PC-9 (cell line): ENCODE measurements at regions of chr3 and their contacts with region 1.

Region 1: DNA sequence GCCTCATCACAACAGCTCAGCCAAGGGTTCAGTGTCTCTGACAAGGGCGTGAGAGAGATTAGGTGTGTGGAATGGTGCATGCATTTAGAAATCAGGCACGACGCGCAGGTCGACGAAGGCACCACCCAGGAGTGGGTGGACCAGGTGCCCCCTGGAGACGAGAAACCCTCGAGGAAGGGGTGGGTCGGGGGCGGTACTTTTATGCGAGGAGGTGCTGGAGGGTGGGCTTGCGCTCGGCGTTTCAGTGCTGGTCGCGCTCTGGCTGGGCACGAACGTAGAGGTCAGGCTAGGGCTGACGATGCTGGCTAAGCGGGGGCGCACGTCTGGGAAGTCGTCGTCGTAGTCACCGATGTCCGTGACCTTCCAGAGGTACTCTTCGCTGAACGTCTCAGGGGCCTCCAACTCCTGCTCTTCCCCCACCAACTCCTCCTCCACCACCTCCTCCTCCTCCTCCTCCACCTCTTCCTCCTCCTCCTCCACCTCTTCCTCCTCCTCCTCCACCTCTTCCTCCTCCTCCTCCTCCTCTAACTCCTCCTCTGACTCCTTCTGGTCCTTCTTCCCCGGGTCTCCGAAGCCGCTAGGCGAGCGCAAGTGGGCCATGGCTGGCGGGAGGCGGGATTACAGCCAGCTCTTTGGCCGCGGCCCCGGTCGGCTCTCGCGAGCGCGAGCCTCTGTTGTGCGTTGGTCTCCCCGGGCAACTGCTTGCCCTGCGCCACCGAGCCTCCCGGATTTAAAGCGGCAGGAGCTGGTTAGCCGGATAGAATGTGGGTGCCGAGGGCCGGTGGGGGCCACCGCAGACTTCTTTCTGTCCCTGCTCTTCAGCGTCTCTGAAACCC is at the start of gene ERICH6:
- DNase-seq: peak; percentile 75 to 94
- H3K4me3 ChIP-seq: peak within 1 kb of the TSS; percentile 72
- H3K27ac ChIP-seq: peak within 1 kb of the TSS; percentile 36
- H3K4me1 ChIP-seq: no peaks in the 10 kb centered on the region
- H3K27me3 ChIP-seq: no peaks in the 10 kb centered on the region
- CTCF ChIP-seq: peak; percentile 21; the same call in 1 of the 2 replicates
- total RNA-seq, gene ERICH6: not detected in 2 replicates

Region 2: DNA sequence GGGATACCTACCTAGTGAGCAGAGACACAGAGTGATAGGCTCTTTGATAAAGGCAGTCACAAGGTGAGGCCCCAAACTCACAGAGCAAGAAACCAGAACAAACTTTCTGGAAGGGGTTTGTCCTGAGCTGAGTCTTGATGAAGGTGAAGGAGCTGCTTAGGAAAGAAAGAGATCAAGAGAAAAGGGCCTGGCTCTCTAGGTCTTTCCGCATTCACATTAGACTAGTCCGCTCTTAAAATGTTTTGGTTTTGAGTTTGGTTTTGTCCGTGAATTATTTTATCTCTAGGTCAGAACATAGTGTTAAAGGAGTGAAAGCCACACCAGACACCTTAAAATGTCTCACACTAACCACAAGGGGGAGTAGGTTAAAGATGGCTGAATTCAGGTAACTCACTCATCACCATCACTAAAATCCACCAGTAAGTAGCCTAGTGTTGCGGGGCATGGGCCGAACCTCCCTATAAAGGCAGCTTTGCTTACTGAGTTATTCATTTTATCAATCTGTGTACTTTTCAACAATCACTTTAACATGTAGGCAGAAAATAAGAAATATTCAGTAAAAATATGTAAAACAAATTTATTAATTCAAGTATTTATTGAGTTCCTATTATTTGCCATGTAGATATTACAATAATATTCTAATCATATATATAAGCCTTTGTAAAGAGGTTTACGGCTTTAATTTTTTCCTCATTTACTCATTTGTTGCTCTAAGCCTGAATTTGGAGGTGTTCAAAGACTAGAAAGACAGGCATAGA is 416.9 kb before region 1 on chr3:
- CTCF ChIA-PET with region 1: interaction called, 11 read pairs
- POLR2A ChIA-PET with region 1: no interaction called
- intact Hi-C with region 1: no loop called
- DNase-seq: peak; percentile 25 to 42
- H3K4me3 ChIP-seq: no peak overlapping the region
- H3K27ac ChIP-seq: peak overlapping the region; percentile 4; the same call in 1 of the 2 replicates
- H3K4me1 ChIP-seq: peaks cover 11% of the 10 kb centered on the region; the same call in 1 of the 2 replicates
- H3K27me3 ChIP-seq: no peaks in the 10 kb centered on the region
- CTCF ChIP-seq: peak; percentile 79

Region 3: GRCh38 chr3:150603153-150603979 is 100.2 kb before region 1 on chr3 and contains the start of gene SELENOT:
- CTCF ChIA-PET with region 1: no interaction called
- POLR2A ChIA-PET with region 1: interaction called, 48 read pairs
- intact Hi-C with region 1: loop called (anchors 1 kb)
- DNase-seq: peak; percentile 88 to 98
- H3K4me3 ChIP-seq: peak within 1 kb of the TSS; percentile 94
- H3K27ac ChIP-seq: peak within 1 kb of the TSS; percentile 93
- H3K4me1 ChIP-seq: peaks cover 53% of the 10 kb centered on the region
- H3K27me3 ChIP-seq: no peaks in the 10 kb centered on the region
- CTCF ChIP-seq: peak; percentile 31; the same call in 1 of the 2 replicates
- total RNA-seq, gene SELENOT: 59.5 and 84.1 TPM in 2 replicates

Region 4: DNA sequence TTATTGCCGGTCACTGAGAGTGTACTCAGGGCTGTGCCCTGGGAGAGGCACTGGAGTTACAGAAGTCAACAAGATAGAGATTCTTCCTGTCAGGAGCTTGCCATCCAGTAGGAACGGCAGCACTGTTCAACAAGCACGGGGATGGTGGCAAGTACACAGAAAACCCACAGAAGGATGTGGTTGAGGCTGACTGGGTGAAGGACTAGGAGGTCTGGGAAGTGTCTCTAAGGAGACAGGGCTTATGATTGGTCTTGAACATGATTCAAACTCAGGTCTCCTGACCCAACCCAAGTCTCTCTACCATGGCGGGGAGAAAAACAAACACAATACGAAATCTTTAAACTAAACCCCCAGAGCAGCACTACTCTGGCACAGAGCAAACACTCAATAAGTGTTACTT is 37.4 kb before region 1 on chr3:
- CTCF ChIA-PET with region 1: no interaction called
- POLR2A ChIA-PET with region 1: no interaction called
- intact Hi-C with region 1: no loop called
- DNase-seq: no peak
- H3K4me3 ChIP-seq: no peak overlapping the region
- H3K27ac ChIP-seq: no peak overlapping the region
- H3K4me1 ChIP-seq: no peaks in the 10 kb centered on the region
- H3K27me3 ChIP-seq: no peaks in the 10 kb centered on the region
- CTCF ChIP-seq: no peak

Region 5: GRCh38 chr3:150830094-150830681 is 126.7 kb after region 1 on chr3:
- CTCF ChIA-PET with region 1: interaction called, 29 read pairs
- POLR2A ChIA-PET with region 1: no interaction called
- intact Hi-C with region 1: no loop called
- DNase-seq: no peak
- H3K4me3 ChIP-seq: no peak overlapping the region
- H3K27ac ChIP-seq: no peak overlapping the region
- H3K4me1 ChIP-seq: no peaks in the 10 kb centered on the region
- H3K27me3 ChIP-seq: no peaks in the 10 kb centered on the region
- CTCF ChIP-seq: peak; percentile 54

Region 6: DNA sequence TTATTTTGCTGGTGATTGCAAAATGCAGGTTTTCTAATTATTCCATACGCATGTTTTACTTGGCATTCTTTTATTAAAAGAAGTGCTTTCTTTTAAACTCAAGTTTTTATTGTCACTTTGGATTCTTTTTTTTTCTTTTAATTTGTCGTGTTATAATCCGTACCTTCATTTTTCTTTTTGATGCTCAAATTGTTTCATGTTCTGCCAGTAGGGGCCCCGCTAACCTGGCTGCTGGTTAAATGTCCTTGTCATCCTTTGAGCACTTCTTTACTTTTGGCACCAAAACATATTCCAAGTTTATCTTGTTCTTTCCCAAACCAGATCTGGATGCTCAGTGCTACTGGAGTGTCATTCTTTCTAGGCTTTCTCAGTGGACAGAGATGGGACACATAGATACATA is 413.5 kb after region 1 on chr3:
- CTCF ChIA-PET with region 1: no interaction called
- POLR2A ChIA-PET with region 1: no interaction called
- intact Hi-C with region 1: no loop called
- DNase-seq: no peak
- H3K4me3 ChIP-seq: no peak overlapping the region
- H3K27ac ChIP-seq: no peak overlapping the region
- H3K4me1 ChIP-seq: no peaks in the 10 kb centered on the region
- H3K27me3 ChIP-seq: no peaks in the 10 kb centered on the region
- CTCF ChIP-seq: no peak; the same call in 1 of the 2 replicates

Region 7: DNA sequence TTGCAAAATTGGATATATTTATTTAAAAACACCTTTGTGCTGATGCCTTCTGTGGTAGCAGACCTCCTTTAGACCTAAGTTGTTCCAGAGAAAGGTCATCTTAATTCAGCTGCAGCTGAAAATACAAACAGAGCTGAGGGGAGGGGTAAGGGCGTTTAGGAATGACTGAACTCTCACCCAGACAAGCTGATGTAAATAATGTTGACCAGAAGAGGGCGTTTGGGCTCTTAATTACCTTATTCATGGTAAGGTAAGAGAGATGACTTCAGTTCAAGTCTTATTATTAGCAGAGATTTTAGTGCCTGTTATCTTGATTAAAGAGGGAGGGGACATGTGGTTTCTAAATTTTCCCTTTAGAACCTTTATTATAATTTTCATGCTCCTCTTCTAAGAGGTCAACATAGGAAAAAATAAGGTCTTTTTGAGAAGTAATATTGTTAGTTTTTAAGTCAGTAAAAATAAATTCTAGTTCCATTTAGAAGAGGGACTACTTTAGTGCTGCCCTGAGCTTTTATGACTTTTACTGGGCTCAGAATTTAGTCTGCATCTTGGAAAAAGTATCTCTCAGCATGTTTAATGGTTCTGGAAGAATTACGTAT is 453.2 kb after region 1 on chr3:
- CTCF ChIA-PET with region 1: no interaction called
- POLR2A ChIA-PET with region 1: no interaction called
- intact Hi-C with region 1: no loop called
- DNase-seq: peak; percentile 23 to 50
- H3K4me3 ChIP-seq: no peak overlapping the region
- H3K27ac ChIP-seq: no peak overlapping the region
- H3K4me1 ChIP-seq: no peaks in the 10 kb centered on the region; the same call in 1 of the 2 replicates
- H3K27me3 ChIP-seq: no peaks in the 10 kb centered on the region
- CTCF ChIP-seq: peak; percentile 76